Gastrocnemius medialis (tissue), 4 donors: ENCODE measurements at regions of chrX and their contacts with region 1.

Region 1: GRCh38 chrX:76454456-76454927 is 27.0 kb downstream of the MAGEE1 start:
- DNase-seq: no peak
- ATAC-seq: no peak
- H3K4me3 ChIP-seq: no peak overlapping the region
- H3K27ac ChIP-seq: no peak overlapping the region
- H3K4me1 ChIP-seq: no peaks in the 10 kb centered on the region
- H3K27me3 ChIP-seq: no peaks in the 10 kb centered on the region
- CTCF ChIP-seq: peak in 4 of 5 experiments; percentile 17 to 47 (median 34)
- POLR2A ChIP-seq: no peak

Region 2: GRCh38 chrX:76279000-76279399 is 175.5 kb before region 1 on chrX:
- in situ Hi-C with region 1: loop called in 1 of 4 experiments (anchors 25 kb)
- intact Hi-C with region 1: no loop called
- DNase-seq: peak in 1 of 2 donors; percentile 11
- ATAC-seq: no peak
- H3K4me3 ChIP-seq: no peak overlapping the region
- H3K27ac ChIP-seq: no peak overlapping the region
- H3K4me1 ChIP-seq: no peaks in the 10 kb centered on the region
- H3K27me3 ChIP-seq: peaks cover 0 to 3% (median 0%) of the 10 kb centered on the region in 3 donors
- CTCF ChIP-seq: peak in 4 of 5 experiments; percentile 6 to 51 (median 36)
- POLR2A ChIP-seq: no peak

Region 3: DNA sequence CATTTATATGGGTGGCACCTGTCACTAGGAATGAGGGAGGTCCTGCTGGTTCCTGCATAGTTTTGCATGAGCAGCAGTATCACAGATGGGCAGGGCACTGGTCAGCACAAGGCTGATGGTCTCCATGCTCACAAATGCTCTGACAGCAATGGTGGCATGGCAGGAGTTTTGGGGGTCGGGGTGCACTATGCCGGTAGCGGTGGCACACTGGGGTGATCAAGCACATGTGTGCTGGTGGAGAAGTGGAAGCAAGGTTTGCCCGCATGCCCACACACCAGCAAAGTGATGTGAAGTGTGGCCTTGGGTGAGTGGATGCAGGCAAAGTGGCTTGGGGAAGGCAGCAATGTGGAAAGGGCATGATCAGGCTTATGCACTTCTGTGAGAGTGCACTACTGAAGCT is 87.5 kb before region 1 on chrX:
- in situ Hi-C with region 1: no loop called
- intact Hi-C with region 1: no loop called
- DNase-seq: no peak
- ATAC-seq: no peak
- H3K4me3 ChIP-seq: no peak overlapping the region
- H3K27ac ChIP-seq: no peak overlapping the region
- H3K4me1 ChIP-seq: no peaks in the 10 kb centered on the region
- H3K27me3 ChIP-seq: no peaks in the 10 kb centered on the region
- CTCF ChIP-seq: no peak
- POLR2A ChIP-seq: no peak